Transverse colon (tissue), 4 donors: ENCODE measurements at regions of chr11 and their contacts with region 1.

Region 1: GRCh38 chr11:59810189-59810910 is at the start of gene MRPL16:
- DNase-seq: peak; percentile 94
- H3K4me3 ChIP-seq: peak within 1 kb of the TSS; percentile 64 to 97 (median 82)
- H3K27ac ChIP-seq: peak within 1 kb of the TSS; percentile 90 to 96 (median 92)
- H3K4me1 ChIP-seq: peaks cover 7 to 29% (median 9%) of the 10 kb centered on the region in 4 donors
- H3K27me3 ChIP-seq: no peaks in the 10 kb centered on the region
- CTCF ChIP-seq: peak in 4 of 5 experiments; percentile 27 to 68 (median 39)
- EP300 ChIP-seq: no peak
- POLR2A ChIP-seq: peak; percentile 79
- total RNA-seq, gene MRPL16: 7.5 to 62.4 (median 37.2) TPM

Region 2: DNA sequence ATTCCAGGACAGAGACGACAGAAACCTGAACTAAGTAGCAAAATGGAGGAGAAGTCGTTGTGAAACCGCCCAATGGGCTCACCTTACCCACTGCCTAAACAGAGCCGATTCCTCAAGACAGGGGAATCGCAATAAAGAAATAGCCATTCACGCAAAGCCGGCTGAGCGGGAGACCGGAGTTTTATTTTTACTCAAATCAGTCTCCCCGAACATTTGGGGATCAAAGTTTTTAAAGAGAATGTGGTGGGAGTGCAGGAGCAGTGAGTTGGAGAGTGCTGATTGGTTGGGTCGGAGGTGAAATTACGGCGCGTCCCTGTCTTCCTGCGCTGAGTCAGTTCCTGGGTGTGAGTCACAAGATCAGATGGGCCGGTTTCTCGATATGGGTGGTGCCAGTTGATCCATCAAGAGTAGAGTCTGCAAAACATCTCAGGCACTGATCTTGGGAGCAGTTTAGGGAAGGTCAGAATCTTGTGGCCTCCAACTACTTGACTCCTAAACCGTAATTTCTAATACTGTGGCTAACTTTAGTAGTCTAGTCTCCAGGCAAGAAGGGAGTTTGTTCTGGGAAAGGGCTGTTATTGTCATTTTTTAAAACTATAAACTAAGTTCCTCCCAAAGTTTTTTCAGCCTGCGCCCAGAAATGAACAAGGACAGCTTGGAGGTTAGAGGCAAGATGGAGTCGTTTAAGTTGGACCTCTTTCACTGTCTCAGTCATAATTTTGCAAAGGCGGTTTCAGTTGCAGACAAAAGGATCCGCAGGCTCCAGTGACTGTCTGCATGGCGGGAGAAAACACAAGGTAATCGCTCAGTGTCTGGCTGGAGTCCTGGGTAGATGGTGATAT is 264.9 kb before region 1 on chr11:
- in situ Hi-C with region 1: loop called in 3 of 4 experiments (anchors 25 kb)
- intact Hi-C with region 1: no loop called
- DNase-seq: no peak
- H3K4me3 ChIP-seq: no peak overlapping the region
- H3K27ac ChIP-seq: no peak overlapping the region
- H3K4me1 ChIP-seq: peaks cover 0 to 6% (median 3%) of the 10 kb centered on the region in 4 donors
- H3K27me3 ChIP-seq: no peaks in the 10 kb centered on the region
- CTCF ChIP-seq: no peak
- EP300 ChIP-seq: no peak
- POLR2A ChIP-seq: no peak

Region 3: GRCh38 chr11:59931688-59932087 is 121.3 kb after region 1 on chr11:
- in situ Hi-C with region 1: no loop called
- intact Hi-C with region 1: no loop called
- DNase-seq: no peak
- H3K4me3 ChIP-seq: no peak overlapping the region
- H3K27ac ChIP-seq: no peak overlapping the region
- H3K4me1 ChIP-seq: no peaks in the 10 kb centered on the region
- H3K27me3 ChIP-seq: no peaks in the 10 kb centered on the region
- CTCF ChIP-seq: no peak
- EP300 ChIP-seq: no peak
- POLR2A ChIP-seq: no peak